B cell (primary cell): ENCODE measurements at regions of chr9 and their contacts with region 1.

Region 1: DNA sequence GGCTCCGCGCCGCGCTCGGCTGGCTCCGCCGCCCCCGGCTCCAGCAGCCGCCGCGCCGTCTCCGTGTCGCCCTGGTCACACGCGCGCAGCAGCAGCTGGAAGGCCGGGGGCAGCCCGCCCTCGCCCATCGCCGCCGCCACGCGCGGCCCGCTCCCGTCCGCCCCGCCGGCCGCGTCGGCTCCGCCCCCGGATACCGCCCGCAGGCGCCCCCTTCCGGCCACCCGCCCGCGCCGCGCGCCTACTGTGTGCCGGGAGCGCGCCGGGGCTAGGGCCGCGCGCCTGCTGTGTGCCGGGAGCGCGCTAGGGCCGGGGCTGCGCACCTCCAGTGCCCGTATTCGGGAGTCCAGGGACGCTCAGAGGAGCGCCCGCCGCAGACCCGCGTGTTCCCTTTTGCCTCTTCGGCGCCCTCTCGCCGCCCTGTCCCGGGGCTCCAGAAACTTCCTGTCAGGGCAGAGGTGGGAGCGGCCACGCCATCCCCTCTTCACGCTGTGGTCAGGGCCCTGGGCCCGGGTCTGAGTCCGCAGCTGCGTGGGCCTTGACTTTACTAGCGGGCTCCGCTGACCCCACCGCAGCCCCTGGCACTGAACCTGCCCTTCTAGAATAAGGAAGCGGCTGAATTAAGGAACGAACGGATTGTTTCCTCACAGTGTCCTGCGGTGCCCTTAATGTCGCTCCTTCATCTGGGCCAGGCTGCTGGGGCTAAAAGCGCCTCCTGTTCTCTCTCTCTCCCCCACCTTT is at the start of gene ANKS6:
- DNase-seq: peak; percentile 88
- ATAC-seq: peak; percentile 93
- H3K4me3 ChIP-seq: peak within 1 kb of the TSS; percentile 35 to 93 (median 78)
- H3K4me3 Mint-ChIP-seq: peak within 1 kb of the TSS; percentile 88
- H3K27ac ChIP-seq: peak within 1 kb of the TSS; percentile 38 to 68
- H3K27ac Mint-ChIP-seq: peak within 1 kb of the TSS; percentile 68
- H3K4me1 ChIP-seq: peaks cover 10 to 13% of the 10 kb centered on the region in 2 donors
- H3K4me1 Mint-ChIP-seq: peaks cover 23% of the 10 kb centered on the region
- H3K27me3 ChIP-seq: no peaks in the 10 kb centered on the region
- H3K27me3 Mint-ChIP-seq: no peaks in the 10 kb centered on the region
- CTCF ChIP-seq: peak; percentile 45
- total RNA-seq, gene ANKS6: 15.1 and 16.1 TPM in 2 replicates

Region 2: DNA sequence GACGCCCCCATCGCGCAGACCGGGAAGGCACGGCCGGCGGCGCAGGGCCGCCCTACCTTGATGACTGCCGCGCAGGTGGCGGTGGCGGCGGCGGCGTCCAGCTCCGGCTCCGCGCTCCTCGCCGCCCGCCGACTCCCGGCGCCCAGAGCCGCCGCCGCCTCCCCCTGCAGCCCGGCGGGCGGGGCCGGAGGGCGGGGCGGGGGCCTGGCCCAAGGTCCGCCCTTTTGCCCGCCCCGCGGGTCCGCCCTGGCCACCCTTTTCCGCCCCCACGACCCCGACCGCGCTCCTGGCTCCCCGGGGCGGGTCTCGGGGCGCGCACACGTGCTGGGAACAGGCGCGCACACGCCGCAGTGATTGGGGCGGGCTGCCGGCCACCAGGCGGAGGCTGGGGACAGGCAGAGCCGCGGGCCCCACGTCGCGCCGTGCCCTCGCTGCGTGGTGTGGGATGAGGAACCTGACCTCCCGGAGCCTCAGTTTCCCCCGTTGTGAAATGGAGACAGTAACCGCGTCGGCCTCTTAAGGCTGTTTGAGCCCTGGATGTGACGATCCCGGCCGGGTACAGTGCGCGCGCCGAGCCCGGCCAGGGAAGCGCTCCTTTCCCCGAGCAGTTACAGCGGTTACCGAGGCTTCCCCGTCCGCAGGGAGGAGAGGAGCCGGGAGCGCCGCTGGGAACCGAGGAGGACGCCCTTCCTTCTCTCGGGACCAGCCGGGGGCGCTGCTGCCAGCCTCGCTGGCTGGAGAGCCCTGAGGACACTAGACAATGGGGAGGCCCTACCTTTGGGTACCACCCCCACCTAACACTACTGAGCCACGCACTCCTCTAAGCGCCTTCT is 603.8 kb before region 1 on chr9 and contains the start of gene CORO2A:
- CTCF ChIA-PET with region 1: no interaction called
- POLR2A ChIA-PET with region 1: no interaction called
- intact Hi-C with region 1: loop called (anchors 2 kb)
- DNase-seq: peak; percentile 73
- ATAC-seq: peak; percentile 91
- H3K4me3 ChIP-seq: peak within 1 kb of the TSS; percentile 34 to 77 (median 67)
- H3K4me3 Mint-ChIP-seq: peak within 1 kb of the TSS; percentile 91
- H3K27ac ChIP-seq: no peak within 1 kb of the TSS
- H3K27ac Mint-ChIP-seq: peak within 1 kb of the TSS; percentile 71
- H3K4me1 ChIP-seq: peaks cover 8 to 18% of the 10 kb centered on the region in 2 donors
- H3K4me1 Mint-ChIP-seq: peaks cover 10% of the 10 kb centered on the region
- H3K27me3 ChIP-seq: peaks cover 0 to 12% (median 2%) of the 10 kb centered on the region in 4 experiments
- H3K27me3 Mint-ChIP-seq: no peaks in the 10 kb centered on the region
- CTCF ChIP-seq: peak; percentile 23
- total RNA-seq, gene CORO2A: 2.0 TPM in 2 replicates

Region 3: DNA sequence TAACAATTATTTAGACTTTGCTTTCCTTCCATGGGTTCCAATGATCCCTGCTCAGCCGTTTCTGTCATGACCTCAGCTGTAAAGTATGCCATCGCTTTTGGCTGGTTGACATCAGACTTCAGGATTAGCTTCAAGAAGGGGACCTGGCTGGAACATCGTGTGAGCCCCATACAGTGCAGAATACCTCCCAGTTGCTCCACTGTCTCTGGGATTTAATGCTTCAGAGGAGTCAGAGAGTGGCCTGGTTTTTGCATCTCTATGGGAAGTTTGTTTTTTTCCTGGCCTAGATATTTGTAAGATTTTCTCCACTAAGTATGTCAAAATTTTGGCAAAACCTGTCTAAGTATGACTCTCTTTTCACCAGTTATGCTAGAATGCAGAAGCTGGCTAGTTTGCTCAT is 304.7 kb before region 1 on chr9:
- CTCF ChIA-PET with region 1: no interaction called
- POLR2A ChIA-PET with region 1: no interaction called
- intact Hi-C with region 1: no loop called
- DNase-seq: no peak
- ATAC-seq: no peak
- H3K4me3 ChIP-seq: no peak overlapping the region
- H3K4me3 Mint-ChIP-seq: no peak overlapping the region
- H3K27ac ChIP-seq: no peak overlapping the region
- H3K27ac Mint-ChIP-seq: no peak overlapping the region
- H3K4me1 ChIP-seq: no peaks in the 10 kb centered on the region
- H3K4me1 Mint-ChIP-seq: no peaks in the 10 kb centered on the region
- H3K27me3 ChIP-seq: peaks cover 0 to 9% (median 6%) of the 10 kb centered on the region in 4 experiments
- H3K27me3 Mint-ChIP-seq: peaks cover 33% of the 10 kb centered on the region
- CTCF ChIP-seq: no peak

Region 4: DNA sequence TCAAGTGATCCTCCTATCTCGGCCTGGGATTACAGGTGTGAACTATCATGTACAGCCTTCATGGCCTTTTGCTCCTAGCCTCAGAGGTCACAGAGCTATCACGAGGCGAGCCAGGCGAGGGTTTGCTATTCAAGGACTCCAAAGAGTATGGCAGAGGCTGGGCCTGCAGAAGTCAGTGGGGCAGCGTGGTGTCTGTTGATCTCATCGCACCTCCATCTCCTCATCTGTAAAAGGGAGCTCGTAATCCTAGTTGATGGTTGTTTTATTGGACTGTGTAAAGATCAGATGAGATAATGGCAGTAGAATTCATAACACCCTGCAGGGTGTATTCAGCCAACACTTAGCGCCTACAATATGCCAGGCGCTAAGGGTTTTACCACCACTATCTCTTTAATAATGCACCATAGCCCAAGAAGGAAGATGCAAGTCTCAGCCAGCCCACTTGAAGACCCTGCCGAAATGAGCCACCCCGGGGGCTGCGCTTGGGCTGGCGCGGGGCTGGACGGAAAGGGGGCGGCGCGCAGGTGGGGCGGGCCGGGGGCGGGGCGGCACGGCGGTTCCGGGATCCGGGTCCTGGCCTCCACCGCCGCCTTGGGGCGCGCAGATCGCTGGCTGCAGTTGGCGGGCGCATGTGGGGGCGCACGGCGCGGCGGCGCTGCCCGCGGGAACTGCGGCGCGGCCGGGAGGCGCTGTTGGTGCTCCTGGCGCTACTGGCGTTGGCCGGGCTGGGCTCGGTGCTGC is 10.7 kb after region 1 on chr9 and contains the start of gene GALNT12:
- CTCF ChIA-PET with region 1: interaction called, 6 read pairs
- POLR2A ChIA-PET with region 1: interaction called, 3 read pairs
- intact Hi-C with region 1: loop called (anchors 1 kb)
- DNase-seq: peak; percentile 69
- ATAC-seq: peak; percentile 88
- H3K4me3 ChIP-seq: peak within 1 kb of the TSS; percentile 31 to 83 (median 57)
- H3K4me3 Mint-ChIP-seq: peak within 1 kb of the TSS; percentile 87
- H3K27ac ChIP-seq: no peak within 1 kb of the TSS
- H3K27ac Mint-ChIP-seq: peak within 1 kb of the TSS; percentile 18
- H3K4me1 ChIP-seq: peaks cover 11 to 18% of the 10 kb centered on the region in 2 donors
- H3K4me1 Mint-ChIP-seq: peaks cover 17% of the 10 kb centered on the region
- H3K27me3 ChIP-seq: peaks cover 0 to 40% (median 7%) of the 10 kb centered on the region in 4 experiments
- H3K27me3 Mint-ChIP-seq: peaks cover 25% of the 10 kb centered on the region
- CTCF ChIP-seq: no peak
- total RNA-seq, gene GALNT12: 4.4 and 4.5 TPM in 2 replicates

Region 5: DNA sequence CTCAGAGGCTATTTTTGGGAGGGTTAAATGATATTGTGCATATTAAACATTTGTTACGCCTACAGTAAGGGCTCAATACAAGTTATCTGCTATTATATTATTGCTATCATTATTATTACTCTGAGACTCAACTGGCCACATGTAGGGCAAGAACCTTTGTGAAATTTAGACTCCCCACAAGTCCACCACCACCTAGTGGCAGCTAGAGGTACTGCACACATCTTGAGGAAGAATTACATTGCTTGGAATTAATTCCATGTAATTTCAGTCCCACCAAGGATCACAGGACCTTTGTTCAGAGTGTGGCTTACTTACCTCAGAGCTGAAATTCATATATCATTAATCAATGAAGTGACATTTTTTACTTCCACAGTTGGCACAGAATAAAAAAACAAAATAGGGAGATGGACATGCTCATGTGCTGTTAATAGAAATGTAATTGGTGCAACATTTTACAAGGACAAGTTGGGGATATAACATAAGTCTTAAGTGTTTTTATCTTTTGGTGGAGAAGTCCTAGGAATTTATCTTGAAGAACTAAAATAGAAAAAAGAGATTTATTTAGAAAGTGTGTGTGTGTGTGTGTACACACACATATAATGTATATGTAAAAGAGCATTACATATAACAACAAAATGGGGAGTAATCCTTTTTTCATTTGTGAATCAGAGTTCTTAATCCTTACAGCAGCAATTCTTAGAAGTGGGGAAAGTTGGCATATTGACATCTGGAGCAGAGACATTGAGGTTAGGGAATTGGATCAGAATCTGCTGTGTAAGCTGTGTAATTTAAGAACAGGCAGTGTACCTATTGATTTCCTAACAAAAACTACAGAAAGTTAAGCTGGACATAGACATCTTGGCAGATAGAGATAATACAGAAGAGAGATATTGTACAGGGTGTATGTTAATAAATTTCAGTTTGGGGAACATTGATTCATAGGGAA is 1641.6 kb after region 1 on chr9:
- CTCF ChIA-PET with region 1: no interaction called
- POLR2A ChIA-PET with region 1: no interaction called
- intact Hi-C with region 1: loop called (anchors 10 kb)
- DNase-seq: peak; percentile 72
- ATAC-seq: peak; percentile 81
- H3K4me3 ChIP-seq: no peak overlapping the region
- H3K4me3 Mint-ChIP-seq: no peak overlapping the region
- H3K27ac ChIP-seq: no peak overlapping the region
- H3K27ac Mint-ChIP-seq: no peak overlapping the region
- H3K4me1 ChIP-seq: no peaks in the 10 kb centered on the region
- H3K4me1 Mint-ChIP-seq: no peaks in the 10 kb centered on the region
- H3K27me3 ChIP-seq: no peaks in the 10 kb centered on the region
- H3K27me3 Mint-ChIP-seq: no peaks in the 10 kb centered on the region
- CTCF ChIP-seq: peak; percentile 99